ENCODE measurements at regions of chr10 and their contacts with region 1.

Region 1: DNA sequence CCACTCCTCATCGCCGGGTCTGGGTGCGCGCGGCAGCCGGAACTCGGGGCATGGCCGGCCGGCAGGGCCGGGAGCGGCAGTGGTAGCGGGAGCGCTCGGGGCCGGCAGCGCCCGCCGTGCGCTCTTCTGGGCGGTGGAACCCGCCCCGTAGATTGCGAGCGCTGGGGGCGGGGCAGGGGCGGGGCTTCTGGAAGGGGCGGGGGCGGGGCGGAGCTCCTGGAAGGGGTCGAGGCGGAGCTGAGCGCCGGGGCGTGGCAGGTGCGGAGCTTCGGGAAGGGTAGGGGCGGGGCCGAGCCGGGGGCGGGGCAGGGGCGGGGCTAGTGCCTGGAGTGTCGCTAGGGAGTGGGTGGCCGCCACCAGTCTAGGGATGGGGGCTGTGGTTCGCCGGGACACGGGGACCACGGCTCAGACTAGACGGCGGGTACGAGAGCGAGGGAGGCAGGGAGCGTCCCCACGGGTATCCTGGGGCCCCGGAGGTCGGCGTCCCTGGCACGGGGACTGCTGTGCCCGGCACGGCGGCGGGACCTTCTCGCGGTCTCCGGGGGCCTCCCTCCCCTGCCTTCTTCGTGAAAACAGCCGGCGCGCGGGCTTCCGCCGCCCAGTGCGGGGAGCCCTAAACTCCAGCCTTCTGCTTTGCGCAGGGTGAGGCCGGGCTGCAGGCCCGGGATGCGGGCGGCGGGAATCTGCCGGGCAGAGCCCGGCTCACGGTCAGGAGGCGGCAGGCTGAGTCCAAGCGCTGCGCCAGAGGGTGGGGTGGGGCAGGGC is at the start of gene STK32C:
- DNase-seq: peak; percentile 88
- H3K4me3 Mint-ChIP-seq: peak within 1 kb of the TSS; percentile 83
- H3K27ac Mint-ChIP-seq: no peak within 1 kb of the TSS
- H3K4me1 Mint-ChIP-seq: no peaks in the 10 kb centered on the region
- H3K27me3 Mint-ChIP-seq: no peaks in the 10 kb centered on the region
- CTCF ChIP-seq: no peak
- total RNA-seq, gene STK32C: 20.7 and 21.2 TPM in 2 replicates

Region 2: GRCh38 chr10:132354356-132355094 is 46.5 kb after region 1 on chr10:
- CTCF ChIA-PET with region 1: interaction called, 3 read pairs
- POLR2A ChIA-PET with region 1: no interaction called
- intact Hi-C with region 1: loop called (anchors 5 kb)
- DNase-seq: no peak
- H3K4me3 Mint-ChIP-seq: no peak overlapping the region
- H3K27ac Mint-ChIP-seq: no peak overlapping the region
- H3K4me1 Mint-ChIP-seq: no peaks in the 10 kb centered on the region
- H3K27me3 Mint-ChIP-seq: no peaks in the 10 kb centered on the region
- CTCF ChIP-seq: no peak

Region 3: DNA sequence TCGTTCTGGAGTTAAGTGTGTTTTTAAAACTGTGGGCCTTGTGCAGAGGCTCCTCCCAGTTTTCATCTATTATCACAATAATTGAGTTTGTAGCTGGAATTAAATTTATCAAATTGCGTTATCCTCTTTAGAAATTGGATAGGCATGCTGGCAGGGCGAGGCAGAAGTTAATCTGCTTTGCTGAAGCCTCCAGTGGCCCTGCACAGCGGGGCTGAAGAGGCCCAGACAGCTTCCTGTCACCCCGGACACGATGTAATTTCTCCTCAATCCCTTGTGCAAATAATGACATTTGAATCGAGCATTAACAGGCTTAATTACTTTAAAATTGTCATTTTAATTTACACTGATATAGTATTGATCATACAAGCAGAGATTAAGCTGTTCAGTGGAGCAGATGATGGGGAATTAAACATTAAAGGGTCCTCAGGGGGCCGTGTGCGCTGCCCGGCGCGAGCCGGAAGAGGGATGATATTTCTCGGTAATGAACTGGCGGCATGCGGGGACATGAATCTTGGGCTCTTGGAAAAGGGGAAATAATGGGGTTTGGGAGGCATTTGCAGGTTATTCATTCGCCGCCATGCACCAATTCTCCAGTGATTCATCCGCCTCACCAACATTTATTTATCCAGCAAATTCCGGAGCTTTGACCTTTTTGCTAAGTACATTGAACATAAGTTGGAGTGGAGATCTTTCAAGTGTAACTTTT is 359.5 kb after region 1 on chr10:
- CTCF ChIA-PET with region 1: no interaction called
- POLR2A ChIA-PET with region 1: no interaction called
- intact Hi-C with region 1: no loop called
- DNase-seq: peak; percentile 35
- H3K4me3 Mint-ChIP-seq: peak overlapping the region; percentile 69
- H3K27ac Mint-ChIP-seq: peak overlapping the region; percentile 82
- H3K4me1 Mint-ChIP-seq: peaks cover 21% of the 10 kb centered on the region
- H3K27me3 Mint-ChIP-seq: no peaks in the 10 kb centered on the region
- CTCF ChIP-seq: no peak

Measured in MCF 10A (cell line).